ENCODE measurements at regions of chr21 and their contacts with region 1.

Region 1: DNA sequence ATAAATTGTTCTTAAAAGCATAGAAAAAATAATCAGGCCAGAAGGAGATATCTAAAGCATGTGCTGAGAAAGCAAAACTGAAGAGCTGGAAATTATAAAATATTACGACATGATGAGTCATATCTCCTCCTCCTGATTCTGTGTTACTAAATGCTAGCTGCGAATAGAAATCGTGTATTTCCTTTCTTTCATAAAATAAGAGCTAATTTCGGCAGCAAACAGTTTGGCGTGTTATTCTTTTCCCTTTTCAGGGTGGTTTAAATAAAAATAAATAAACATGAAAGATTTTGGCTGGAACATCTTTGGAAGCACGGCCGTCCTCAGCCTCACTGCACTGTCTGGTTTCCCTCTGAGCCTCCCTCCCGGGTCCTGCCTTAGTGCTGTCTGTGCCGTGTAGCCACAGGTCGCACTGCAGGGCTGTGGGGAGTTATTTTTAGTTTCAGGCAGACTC is 56.0 kb downstream of the ADARB1 start:
- DNase-seq: no peak
- H3K4me3 ChIP-seq: peak overlapping the region; percentile 46
- CTCF ChIP-seq: no peak

Region 2: GRCh38 chr21:44927587-44928461 is 202.5 kb before region 1 on chr21:
- CTCF ChIA-PET with region 1: interaction called, 24 read pairs
- POLR2A ChIA-PET with region 1: no interaction called
- DNase-seq: no peak
- H3K4me3 ChIP-seq: no peak overlapping the region; the same call in 1 of the 2 replicates
- CTCF ChIP-seq: peak; percentile 18

Region 3: GRCh38 chr21:44949779-44950198 is 180.6 kb before region 1 on chr21:
- CTCF ChIA-PET with region 1: interaction called, 601 read pairs
- POLR2A ChIA-PET with region 1: no interaction called
- DNase-seq: no peak
- H3K4me3 ChIP-seq: no peak overlapping the region
- CTCF ChIP-seq: peak; percentile 98

Region 4: DNA sequence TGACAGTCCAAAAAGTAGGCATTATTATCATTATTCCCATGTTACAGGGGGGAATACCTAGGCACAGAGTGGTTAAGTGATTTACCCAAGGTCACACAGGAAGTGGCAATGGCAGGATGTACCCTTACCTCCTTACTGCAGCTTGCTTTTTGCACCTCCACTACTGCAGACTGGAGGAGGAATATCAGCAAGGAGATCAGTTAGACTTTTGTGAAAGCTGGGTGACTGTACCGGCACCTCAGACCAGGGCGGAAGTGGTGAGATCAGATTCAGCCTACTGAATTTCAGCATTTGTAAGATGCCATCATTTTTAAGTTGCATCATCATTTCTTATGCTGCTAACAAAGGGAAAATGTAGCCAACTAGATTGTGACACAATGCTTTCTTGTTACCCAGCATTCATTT is 51.5 kb before region 1 on chr21:
- CTCF ChIA-PET with region 1: interaction called, 11 read pairs
- POLR2A ChIA-PET with region 1: no interaction called
- DNase-seq: no peak
- H3K4me3 ChIP-seq: no peak overlapping the region
- CTCF ChIP-seq: no peak

Region 5: DNA sequence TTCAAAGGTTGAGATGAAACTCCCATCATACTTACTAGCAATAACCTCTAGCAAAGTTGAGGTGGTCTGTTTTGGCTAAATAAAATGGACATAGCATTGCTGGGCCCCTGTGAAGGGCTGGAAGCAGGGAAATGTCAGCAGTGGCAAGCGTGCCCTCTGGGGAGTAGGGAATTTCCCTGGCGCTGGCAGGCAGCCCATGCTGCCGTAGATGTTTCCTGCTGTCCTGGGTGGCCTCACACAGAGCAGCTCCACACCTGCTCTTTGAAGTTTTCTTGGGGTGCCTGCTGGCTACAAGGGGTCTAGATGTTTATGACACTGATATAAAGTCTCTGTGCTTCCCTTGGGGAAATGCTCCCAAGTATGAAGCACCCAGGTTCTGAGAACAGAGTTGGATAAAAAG is 25.8 kb before region 1 on chr21:
- CTCF ChIA-PET with region 1: interaction called, 50 read pairs
- POLR2A ChIA-PET with region 1: no interaction called
- DNase-seq: no peak
- H3K4me3 ChIP-seq: no peak overlapping the region
- CTCF ChIP-seq: no peak